Natural killer cell (primary cell): ENCODE measurements at regions of chr6 and their contacts with region 1.

Region 1: GRCh38 chr6:41027799-41028628 is 11.0 kb downstream of the UNC5CL start:
- DNase-seq: peak; percentile 80 to 84
- ATAC-seq: peak; percentile 93 to 97 (median 95)
- H3K4me3 ChIP-seq: peak overlapping the region; percentile 53
- H3K4me3 Mint-ChIP-seq: peak overlapping the region; percentile 91
- H3K27ac ChIP-seq: peak overlapping the region; percentile 60
- H3K27ac Mint-ChIP-seq: peak overlapping the region; percentile 7 to 79
- H3K4me1 ChIP-seq: peaks cover 20% of the 10 kb centered on the region
- H3K4me1 Mint-ChIP-seq: peaks cover 24 to 28% of the 10 kb centered on the region in 2 donors
- H3K27me3 ChIP-seq: no peaks in the 10 kb centered on the region
- H3K27me3 Mint-ChIP-seq: no peaks in the 10 kb centered on the region
- CTCF ChIP-seq: peak; percentile 99

Region 2: DNA sequence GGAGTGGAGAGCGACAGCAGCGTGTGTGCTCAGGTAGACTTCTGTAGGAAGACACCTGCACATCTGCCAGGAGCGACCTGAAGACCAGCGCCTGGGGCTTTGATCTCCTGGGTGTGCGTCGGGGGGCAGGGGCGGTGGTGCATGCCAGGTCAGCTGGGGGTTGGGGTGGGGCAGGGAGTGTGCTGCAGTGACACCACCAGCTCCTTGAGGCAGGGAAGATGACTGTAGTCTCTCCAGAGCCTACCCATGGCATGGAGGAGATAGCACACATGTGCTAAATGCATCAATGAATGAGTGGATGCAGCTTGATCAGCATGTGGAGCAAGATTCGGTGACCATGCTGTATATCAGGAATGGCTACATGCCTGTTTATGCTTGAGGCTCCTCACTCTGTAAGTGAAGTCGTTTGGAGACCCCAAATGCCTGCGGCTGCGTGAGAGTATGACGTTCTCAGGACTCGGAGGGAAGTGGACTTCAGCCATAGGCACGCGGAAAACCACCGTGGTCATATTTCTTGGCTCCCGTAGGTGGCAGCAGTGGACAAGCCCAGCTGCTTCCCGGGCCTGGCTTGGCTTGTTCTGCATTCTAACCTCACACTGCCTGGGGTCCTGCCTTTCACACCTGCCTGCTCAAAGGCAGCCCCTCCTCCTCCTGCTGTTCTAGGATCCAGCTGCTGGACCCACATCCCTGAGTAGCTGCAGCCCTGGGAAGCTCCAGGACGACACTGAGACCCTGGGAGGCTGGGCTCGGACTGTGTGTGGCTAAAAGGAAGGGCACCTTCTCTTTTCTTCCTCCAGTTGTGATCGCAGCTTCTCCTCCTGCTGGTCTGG is 1666.1 kb before region 1 on chr6:
- intact Hi-C with region 1: loop called (anchors 5 kb)
- DNase-seq: peak; percentile 36 to 60
- ATAC-seq: peak; percentile 66 to 88 (median 75)
- H3K4me3 ChIP-seq: no peak overlapping the region
- H3K4me3 Mint-ChIP-seq: no peak overlapping the region
- H3K27ac ChIP-seq: no peak overlapping the region
- H3K27ac Mint-ChIP-seq: no peak overlapping the region
- H3K4me1 ChIP-seq: peaks cover 6% of the 10 kb centered on the region
- H3K4me1 Mint-ChIP-seq: peaks cover 4 to 5% of the 10 kb centered on the region in 2 donors
- H3K27me3 ChIP-seq: no peaks in the 10 kb centered on the region
- H3K27me3 Mint-ChIP-seq: peaks cover 0 to 15% of the 10 kb centered on the region in 2 donors
- CTCF ChIP-seq: peak; percentile 74

Region 3: DNA sequence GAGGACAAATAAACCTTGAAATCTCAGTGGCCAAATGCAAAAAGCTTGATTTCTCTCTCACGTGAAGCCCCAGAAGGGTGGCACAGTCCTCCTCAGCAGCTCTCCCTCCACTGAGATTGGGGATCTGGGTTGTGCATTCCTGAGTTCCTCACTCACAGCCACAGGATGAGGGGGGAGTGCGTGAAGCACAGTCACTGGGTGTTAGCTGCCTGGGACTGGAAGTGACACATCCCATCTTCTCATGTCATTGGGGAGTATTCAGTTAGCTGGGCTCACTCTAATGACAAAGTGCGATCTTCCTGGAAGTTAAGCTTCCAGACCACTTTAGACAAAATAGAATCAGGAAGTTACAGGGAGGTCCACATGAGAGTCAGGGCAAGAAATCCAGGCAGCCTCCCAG is 248.6 kb before region 1 on chr6:
- intact Hi-C with region 1: no loop called
- DNase-seq: no peak
- ATAC-seq: no peak
- H3K4me3 ChIP-seq: no peak overlapping the region
- H3K4me3 Mint-ChIP-seq: no peak overlapping the region
- H3K27ac ChIP-seq: no peak overlapping the region
- H3K27ac Mint-ChIP-seq: no peak overlapping the region
- H3K4me1 ChIP-seq: no peaks in the 10 kb centered on the region
- H3K4me1 Mint-ChIP-seq: no peaks in the 10 kb centered on the region
- H3K27me3 ChIP-seq: no peaks in the 10 kb centered on the region
- H3K27me3 Mint-ChIP-seq: peaks cover 11 to 12% of the 10 kb centered on the region in 2 donors
- CTCF ChIP-seq: no peak

Region 4: GRCh38 chr6:41002216-41002615 is 25.8 kb before region 1 on chr6:
- intact Hi-C with region 1: loop called (anchors 1 kb)
- DNase-seq: no peak
- ATAC-seq: no peak
- H3K4me3 ChIP-seq: no peak overlapping the region
- H3K4me3 Mint-ChIP-seq: no peak overlapping the region
- H3K27ac ChIP-seq: no peak overlapping the region
- H3K27ac Mint-ChIP-seq: no peak overlapping the region
- H3K4me1 ChIP-seq: no peaks in the 10 kb centered on the region
- H3K4me1 Mint-ChIP-seq: no peaks in the 10 kb centered on the region
- H3K27me3 ChIP-seq: no peaks in the 10 kb centered on the region
- H3K27me3 Mint-ChIP-seq: peaks cover 24 to 77% of the 10 kb centered on the region in 2 donors
- CTCF ChIP-seq: no peak

Region 5: DNA sequence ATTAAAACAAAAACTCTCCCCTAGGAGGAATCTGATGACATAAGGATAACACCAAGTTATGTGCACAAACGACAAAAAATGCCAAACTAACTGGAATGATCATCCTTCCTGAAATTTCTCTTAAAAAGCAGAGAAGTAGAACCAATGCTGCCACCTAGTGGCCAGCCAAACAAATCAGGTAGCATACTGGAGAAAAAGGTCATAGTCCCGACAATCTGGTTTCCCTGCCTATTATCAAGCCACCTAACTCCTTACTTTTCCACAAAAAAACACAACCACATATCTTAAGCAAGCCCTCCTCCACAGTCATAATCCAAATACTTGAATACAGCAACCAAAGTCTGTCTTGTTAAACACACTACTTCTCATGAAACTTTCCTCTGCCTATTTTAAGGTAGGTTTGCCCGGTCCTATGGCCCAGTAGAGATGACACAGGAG is 38.9 kb after region 1 on chr6:
- intact Hi-C with region 1: loop called (anchors 5 kb)
- DNase-seq: peak; percentile 59 to 88
- ATAC-seq: peak in 1 of 3 donors; percentile 18
- H3K4me3 ChIP-seq: no peak overlapping the region
- H3K4me3 Mint-ChIP-seq: no peak overlapping the region
- H3K27ac ChIP-seq: no peak overlapping the region
- H3K27ac Mint-ChIP-seq: peak overlapping the region; percentile 10 to 64
- H3K4me1 ChIP-seq: peaks cover 5% of the 10 kb centered on the region
- H3K4me1 Mint-ChIP-seq: peaks cover 24 to 27% of the 10 kb centered on the region in 2 donors
- H3K27me3 ChIP-seq: no peaks in the 10 kb centered on the region
- H3K27me3 Mint-ChIP-seq: no peaks in the 10 kb centered on the region
- CTCF ChIP-seq: peak; percentile 97